Activated B cell treated with CpG ODN at 0.5 μM for 24 hours (primary cell): ENCODE measurements at regions of chr22 and their contacts with region 1.

Region 1: GRCh38 chr22:37121887-37122591 is 12.5 kb upstream of the TMPRSS6 start:
- DNase-seq: peak; percentile 62
- ATAC-seq: peak; percentile 92
- H3K4me3 Mint-ChIP-seq: peak overlapping the region; percentile 76
- H3K27ac Mint-ChIP-seq: peak overlapping the region; percentile 94
- H3K4me1 Mint-ChIP-seq: peaks cover 44% of the 10 kb centered on the region
- H3K27me3 Mint-ChIP-seq: no peaks in the 10 kb centered on the region
- CTCF ChIP-seq: no peak

Region 2: DNA sequence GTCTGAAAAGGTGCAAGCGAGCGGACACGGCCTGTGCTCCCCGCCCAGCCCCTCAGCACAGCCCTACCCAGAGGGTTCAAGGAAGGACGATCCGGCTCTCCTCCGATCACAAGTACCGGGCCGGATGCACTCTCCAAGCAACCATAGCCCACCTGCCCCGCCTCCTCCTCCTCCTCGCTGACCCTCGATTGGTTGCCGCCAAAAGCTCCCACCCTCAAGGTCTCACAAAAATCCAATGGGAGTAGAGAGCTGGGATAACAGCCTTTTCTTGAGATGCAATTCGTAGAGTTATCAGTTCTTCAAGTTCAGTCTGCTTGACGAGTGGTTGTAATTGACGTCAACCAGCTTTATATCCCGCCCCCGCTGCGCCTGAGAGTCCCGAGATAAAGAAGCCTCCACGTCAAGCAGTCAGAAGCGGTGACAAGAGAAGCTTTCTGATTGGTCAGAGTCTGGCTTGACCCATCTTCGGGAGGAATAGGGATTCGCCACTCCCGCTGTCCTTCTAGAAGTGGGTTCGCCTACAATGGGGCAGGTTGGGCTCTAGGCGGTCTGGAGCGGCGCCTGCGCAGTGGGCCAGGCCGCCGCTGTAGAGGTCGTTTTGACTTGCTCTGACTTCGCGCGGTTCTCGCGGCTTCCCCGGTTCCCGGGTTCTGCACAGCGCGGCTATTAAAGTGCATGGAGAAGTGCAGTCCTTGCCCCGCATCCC is 345.9 kb before region 1 on chr22 and contains the start of gene IFT27:
- CTCF ChIA-PET with region 1: no interaction called
- POLR2A ChIA-PET with region 1: no interaction called
- intact Hi-C with region 1: loop called (anchors 1 kb)
- DNase-seq: peak; percentile 81
- ATAC-seq: peak; percentile 89
- H3K4me3 Mint-ChIP-seq: peak within 1 kb of the TSS; percentile 88
- H3K27ac Mint-ChIP-seq: peak within 1 kb of the TSS; percentile 89
- H3K4me1 Mint-ChIP-seq: peaks cover 14% of the 10 kb centered on the region
- H3K27me3 Mint-ChIP-seq: no peaks in the 10 kb centered on the region
- CTCF ChIP-seq: no peak
- total RNA-seq, gene IFT27: 26.2 and 32.7 TPM in 2 replicates

Region 3: GRCh38 chr22:37077884-37078485 is 44.1 kb before region 1 on chr22:
- CTCF ChIA-PET with region 1: interaction called, 15 read pairs
- POLR2A ChIA-PET with region 1: interaction called, 9 read pairs
- intact Hi-C with region 1: loop called (anchors 1 kb)
- DNase-seq: peak; percentile 81
- ATAC-seq: peak; percentile 60
- H3K4me3 Mint-ChIP-seq: no peak overlapping the region
- H3K27ac Mint-ChIP-seq: peak overlapping the region; percentile 50
- H3K4me1 Mint-ChIP-seq: peaks cover 25% of the 10 kb centered on the region
- H3K27me3 Mint-ChIP-seq: no peaks in the 10 kb centered on the region
- CTCF ChIP-seq: peak; percentile 87

Region 4: GRCh38 chr22:37139762-37140161 is 17.7 kb after region 1 on chr22:
- CTCF ChIA-PET with region 1: no interaction called
- POLR2A ChIA-PET with region 1: interaction called, 10 read pairs
- intact Hi-C with region 1: loop called (anchors 1 kb)
- DNase-seq: no peak
- ATAC-seq: peak; percentile 62
- H3K4me3 Mint-ChIP-seq: no peak overlapping the region
- H3K27ac Mint-ChIP-seq: peak overlapping the region; percentile 51
- H3K4me1 Mint-ChIP-seq: peaks cover 20% of the 10 kb centered on the region
- H3K27me3 Mint-ChIP-seq: no peaks in the 10 kb centered on the region
- CTCF ChIP-seq: no peak

Region 5: DNA sequence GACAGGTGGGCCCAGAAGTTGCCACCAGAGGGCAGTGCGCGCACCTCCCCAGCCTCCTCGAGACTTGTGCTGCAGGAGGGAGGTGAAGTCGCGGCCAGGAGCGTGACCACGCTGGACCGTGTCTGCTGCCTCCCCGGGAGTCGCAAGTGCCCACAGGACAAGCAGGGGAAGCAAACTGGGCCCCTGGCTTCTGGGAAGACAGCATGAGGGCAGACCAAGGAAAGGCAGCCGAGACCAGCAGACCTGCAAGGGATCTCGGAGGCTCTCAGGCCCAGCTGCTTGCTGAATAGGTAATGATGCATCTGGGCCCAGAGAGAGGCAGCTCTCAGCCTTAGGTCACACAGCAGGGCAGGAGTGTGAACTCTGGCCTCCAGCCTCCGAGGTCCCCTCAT is 44.6 kb after region 1 on chr22:
- CTCF ChIA-PET with region 1: interaction called, 7 read pairs
- POLR2A ChIA-PET with region 1: interaction called, 34 read pairs
- intact Hi-C with region 1: loop called (anchors 1 kb)
- DNase-seq: peak; percentile 73
- ATAC-seq: peak; percentile 44
- H3K4me3 Mint-ChIP-seq: peak overlapping the region; percentile 7
- H3K27ac Mint-ChIP-seq: peak overlapping the region; percentile 21
- H3K4me1 Mint-ChIP-seq: peaks cover 39% of the 10 kb centered on the region
- H3K27me3 Mint-ChIP-seq: no peaks in the 10 kb centered on the region
- CTCF ChIP-seq: peak; percentile 69